Activated CD8-positive, alpha-beta memory T cell treated with anti-CD3 and anti-CD28 coated beads, Interleukin-2, amount 10 ng/mL, durations not matched to agents 7 days and 5 days (primary cell): ENCODE measurements at regions of chr10 and their contacts with region 1.

Region 1: DNA sequence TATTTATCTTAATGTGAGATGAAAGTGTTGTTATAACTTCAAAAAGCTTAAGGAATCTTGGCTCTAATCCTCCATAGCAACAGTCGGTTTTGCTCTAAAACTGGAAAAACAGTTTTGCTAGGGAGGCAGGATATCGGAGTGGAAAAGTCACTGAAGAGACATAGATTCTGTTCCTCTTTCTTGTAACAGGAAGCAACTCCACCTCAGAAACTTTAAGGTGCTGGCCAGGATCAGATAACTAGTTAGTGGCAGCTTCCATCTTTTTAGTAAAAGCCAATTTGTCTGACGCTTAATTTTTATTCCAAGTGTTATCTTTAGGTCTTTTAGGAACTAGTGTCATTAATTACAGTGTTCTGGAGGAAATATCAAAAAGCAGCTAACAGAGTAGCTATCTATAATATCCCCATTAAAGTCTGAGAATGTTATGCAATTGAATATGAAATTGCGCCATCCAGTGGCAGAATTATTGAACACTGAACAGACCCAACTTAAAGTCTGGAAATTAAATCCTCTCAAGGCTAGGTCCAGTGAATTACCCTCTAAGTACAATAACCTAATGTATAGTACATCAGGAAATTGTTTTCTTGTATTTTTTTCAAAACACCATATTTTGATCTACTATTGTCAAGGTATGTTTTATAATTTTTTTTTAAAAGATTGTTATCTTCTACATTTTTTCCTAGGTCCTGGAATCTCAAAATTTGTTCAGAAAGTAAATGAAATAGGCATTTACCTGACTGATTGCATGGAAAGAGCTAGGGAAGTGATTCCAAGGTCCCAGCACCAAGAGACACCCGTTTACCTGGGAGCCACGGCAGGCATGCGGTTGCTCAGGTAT is 65.9 kb upstream of the CC2D2B start:
- DNase-seq: no peak
- ATAC-seq: peak; percentile 65
- H3K4me3 Mint-ChIP-seq: no peak overlapping the region
- H3K27ac Mint-ChIP-seq: peak overlapping the region; percentile 84
- H3K4me1 Mint-ChIP-seq: peaks cover 79% of the 10 kb centered on the region
- H3K27me3 Mint-ChIP-seq: no peaks in the 10 kb centered on the region

Region 2: GRCh38 chr10:95445837-95446486 is 395.9 kb before region 1 on chr10:
- CTCF ChIA-PET with region 1: no interaction called
- DNase-seq: peak; percentile 61
- ATAC-seq: peak; percentile 53
- H3K4me3 Mint-ChIP-seq: no peak overlapping the region
- H3K27ac Mint-ChIP-seq: no peak overlapping the region
- H3K4me1 Mint-ChIP-seq: peaks cover 11% of the 10 kb centered on the region
- H3K27me3 Mint-ChIP-seq: peaks cover 37% of the 10 kb centered on the region

Region 3: GRCh38 chr10:95755511-95756004 is 86.3 kb before region 1 on chr10:
- CTCF ChIA-PET with region 1: interaction called, 53 read pairs
- DNase-seq: peak; percentile 74
- ATAC-seq: peak; percentile 37
- H3K4me3 Mint-ChIP-seq: peak overlapping the region; percentile 89
- H3K27ac Mint-ChIP-seq: peak overlapping the region; percentile 95
- H3K4me1 Mint-ChIP-seq: peaks cover 53% of the 10 kb centered on the region
- H3K27me3 Mint-ChIP-seq: peaks cover 5% of the 10 kb centered on the region

Region 4: DNA sequence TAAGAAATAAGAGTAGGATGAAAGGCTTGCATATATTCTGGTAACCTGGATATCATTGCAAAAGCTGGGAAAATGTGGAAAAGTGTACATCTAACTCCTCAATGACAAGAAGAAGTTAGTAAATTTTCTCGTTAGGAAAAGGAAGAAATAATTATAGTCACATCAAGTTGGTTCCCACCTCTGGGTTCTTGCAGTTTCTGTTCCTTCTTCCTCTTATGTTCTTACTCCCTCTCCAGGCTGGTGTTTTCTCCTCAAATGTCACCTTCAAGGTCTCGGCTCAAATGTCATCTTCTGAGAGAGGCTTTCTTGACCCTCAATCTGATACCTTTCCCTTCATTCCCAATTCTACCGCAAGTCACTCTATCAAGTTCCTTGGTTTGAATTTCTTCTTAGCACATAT is 21.5 kb before region 1 on chr10:
- CTCF ChIA-PET with region 1: interaction called, 13 read pairs
- DNase-seq: no peak
- ATAC-seq: no peak
- H3K4me3 Mint-ChIP-seq: no peak overlapping the region
- H3K27ac Mint-ChIP-seq: peak overlapping the region; percentile 54
- H3K4me1 Mint-ChIP-seq: peaks cover 58% of the 10 kb centered on the region
- H3K27me3 Mint-ChIP-seq: no peaks in the 10 kb centered on the region

Region 5: GRCh38 chr10:95864906-95865813 is 23.3 kb after region 1 on chr10:
- CTCF ChIA-PET with region 1: interaction called, 81 read pairs
- DNase-seq: peak; percentile 73
- ATAC-seq: peak; percentile 91
- H3K4me3 Mint-ChIP-seq: no peak overlapping the region
- H3K27ac Mint-ChIP-seq: peak overlapping the region; percentile 79
- H3K4me1 Mint-ChIP-seq: peaks cover 57% of the 10 kb centered on the region
- H3K27me3 Mint-ChIP-seq: no peaks in the 10 kb centered on the region